Kidney (tissue), 22 donors: ENCODE measurements at regions of chr1 and their contacts with region 1.

Region 1: DNA sequence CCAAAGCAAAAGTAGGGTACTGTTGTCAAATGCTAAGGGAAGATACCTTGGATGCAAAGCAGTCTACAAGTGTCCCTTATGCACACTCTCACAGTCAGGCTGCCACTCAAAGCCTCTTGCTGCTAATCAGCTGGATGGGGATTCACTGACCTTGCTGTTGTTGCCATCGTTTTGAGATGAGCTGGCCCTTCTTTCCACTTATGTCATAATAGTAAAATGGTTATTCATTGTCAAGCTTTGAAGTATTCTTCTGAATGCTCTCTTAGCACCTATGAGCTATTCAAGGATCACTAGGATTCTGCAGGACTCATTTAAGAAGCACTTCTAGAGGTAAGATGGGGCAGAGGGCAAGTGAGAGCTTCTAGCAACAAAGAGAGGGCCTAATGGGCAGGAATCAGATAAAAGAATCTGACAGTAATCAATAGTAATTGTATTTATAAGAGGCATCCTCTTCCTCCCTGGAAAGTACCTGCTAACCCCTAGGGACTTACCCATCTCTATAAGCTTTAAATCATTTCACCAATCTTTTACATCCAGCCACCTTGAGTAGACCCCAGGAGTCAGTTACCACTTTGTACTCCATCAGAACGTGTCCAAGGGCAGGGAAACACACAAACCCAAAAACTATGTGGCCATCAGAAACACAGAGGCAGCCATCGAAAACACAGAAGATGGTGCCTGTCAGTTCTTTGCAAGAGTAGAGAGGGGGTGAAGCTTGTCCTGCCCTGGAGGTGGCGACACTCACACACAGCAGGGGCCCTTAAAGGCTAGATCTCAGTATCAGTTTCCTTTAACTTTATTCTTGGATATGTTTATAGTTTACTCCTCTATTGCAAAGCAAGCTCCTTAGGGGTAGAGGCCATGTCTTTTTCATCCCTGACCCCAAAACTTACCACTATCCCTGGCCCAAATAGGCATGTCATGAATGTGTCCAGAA is 103.7 kb upstream of the NFIA start:
- DNase-seq: peak in 4 of 5 donors; percentile 46 to 64 (median 50)
- H3K4me3 ChIP-seq: no peak overlapping the region
- H3K27ac ChIP-seq: no peak overlapping the region
- H3K4me1 ChIP-seq: peaks cover 0 to 4% (median 0%) of the 10 kb centered on the region in 3 donors
- H3K27me3 ChIP-seq: no peaks in the 10 kb centered on the region
- CTCF ChIP-seq: peak; percentile 50

Region 2: DNA sequence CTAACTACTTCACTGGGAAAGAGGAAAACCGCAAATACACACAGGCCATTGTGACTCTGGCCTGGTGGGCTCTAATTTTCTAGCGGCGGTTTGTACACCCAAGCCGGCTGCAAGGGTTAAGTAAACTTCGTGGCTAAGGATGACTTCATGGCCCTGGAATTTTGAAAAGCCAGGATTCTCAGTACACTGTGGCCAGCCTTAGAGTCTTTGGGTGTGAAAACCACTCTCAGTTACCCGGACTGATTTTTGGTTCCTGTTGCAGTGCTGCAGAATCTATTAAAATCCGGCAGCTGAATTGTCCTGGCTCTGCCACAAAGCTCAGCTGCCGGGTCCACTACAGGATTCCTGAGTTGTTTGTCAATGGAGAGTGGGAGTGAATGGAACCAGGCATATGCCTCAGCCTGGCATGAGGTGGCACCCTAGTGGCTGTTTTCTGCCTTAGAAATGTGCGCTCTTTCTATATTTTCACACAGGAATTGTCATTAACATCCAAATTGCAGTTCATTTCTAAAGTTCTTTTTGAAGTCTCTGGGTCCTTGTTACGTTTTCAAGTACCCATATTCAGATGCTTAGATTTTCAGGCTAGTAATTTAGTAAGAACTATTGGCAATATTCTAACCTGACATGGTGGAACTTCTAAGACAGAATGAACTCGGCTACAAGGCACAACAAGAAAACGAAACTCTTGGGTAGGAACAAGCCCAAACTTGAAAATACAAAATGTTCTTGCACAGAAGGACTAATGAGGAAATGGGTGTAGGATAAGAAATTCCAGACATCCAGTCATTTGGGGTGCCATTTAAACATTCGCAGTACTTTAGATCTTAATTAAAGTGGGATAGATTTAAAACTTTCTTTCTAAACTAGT is 359.5 kb after region 1 on chr1:
- intact Hi-C with region 1: no loop called
- DNase-seq: peak; percentile 70 to 93 (median 82)
- H3K4me3 ChIP-seq: peak overlapping the region in 2 of 3 donors; percentile 10 to 36
- H3K27ac ChIP-seq: peak overlapping the region; percentile 3 to 76
- H3K4me1 ChIP-seq: peaks cover 4 to 6% (median 4%) of the 10 kb centered on the region in 3 donors
- H3K27me3 ChIP-seq: no peaks in the 10 kb centered on the region
- CTCF ChIP-seq: peak; percentile 80

Region 3: GRCh38 chr1:61453111-61453961 is 474.6 kb after region 1 on chr1:
- intact Hi-C with region 1: loop called (anchors 10 kb)
- DNase-seq: peak; percentile 89 to 97 (median 92)
- H3K4me3 ChIP-seq: no peak overlapping the region
- H3K27ac ChIP-seq: peak overlapping the region; percentile 40 to 89
- H3K4me1 ChIP-seq: peaks cover 30 to 49% (median 30%) of the 10 kb centered on the region in 3 donors
- H3K27me3 ChIP-seq: no peaks in the 10 kb centered on the region
- CTCF ChIP-seq: peak; percentile 93